Colonic mucosa (tissue), 4 donors: ENCODE measurements at regions of chr11 and their contacts with region 1.

Region 1: GRCh38 chr11:24386546-24387397 is 110.1 kb upstream of the LUZP2 start:
- DNase-seq: no peak
- H3K4me3 ChIP-seq: no peak overlapping the region
- H3K27ac ChIP-seq: no peak overlapping the region
- H3K4me1 ChIP-seq: no peaks in the 10 kb centered on the region
- H3K27me3 ChIP-seq: no peaks in the 10 kb centered on the region
- CTCF ChIP-seq: peak; percentile 30

Region 2: GRCh38 chr11:23112987-23113886 is 1273.5 kb before region 1 on chr11:
- intact Hi-C with region 1: loop called (anchors 10 kb)
- DNase-seq: peak; percentile 87
- H3K4me3 ChIP-seq: no peak overlapping the region
- H3K27ac ChIP-seq: peak overlapping the region; percentile 19
- H3K4me1 ChIP-seq: no peaks in the 10 kb centered on the region
- H3K27me3 ChIP-seq: no peaks in the 10 kb centered on the region
- CTCF ChIP-seq: peak; percentile 46